ENCODE measurements at regions of chr9 and their contacts with region 1.

Region 1: GRCh38 chr9:114587385-114588202 is at the start of gene ATP6V1G1:
- DNase-seq: peak; percentile 98
- H3K4me3 ChIP-seq: peak within 1 kb of the TSS; percentile 81 to 90 (median 88)
- H3K27ac ChIP-seq: peak within 1 kb of the TSS; percentile 90 to 97 (median 96)
- H3K4me1 ChIP-seq: peaks cover 35 to 50% (median 37%) of the 10 kb centered on the region in 3 donors
- H3K27me3 ChIP-seq: no peaks in the 10 kb centered on the region
- CTCF ChIP-seq: peak in 4 of 6 experiments; percentile 6 to 42 (median 14)
- POLR2A ChIP-seq: peak in 3 of 4 donors; percentile 85 to 95 (median 89)
- total RNA-seq, gene ATP6V1G1: 151 to 210 (median 185) TPM

Region 2: DNA sequence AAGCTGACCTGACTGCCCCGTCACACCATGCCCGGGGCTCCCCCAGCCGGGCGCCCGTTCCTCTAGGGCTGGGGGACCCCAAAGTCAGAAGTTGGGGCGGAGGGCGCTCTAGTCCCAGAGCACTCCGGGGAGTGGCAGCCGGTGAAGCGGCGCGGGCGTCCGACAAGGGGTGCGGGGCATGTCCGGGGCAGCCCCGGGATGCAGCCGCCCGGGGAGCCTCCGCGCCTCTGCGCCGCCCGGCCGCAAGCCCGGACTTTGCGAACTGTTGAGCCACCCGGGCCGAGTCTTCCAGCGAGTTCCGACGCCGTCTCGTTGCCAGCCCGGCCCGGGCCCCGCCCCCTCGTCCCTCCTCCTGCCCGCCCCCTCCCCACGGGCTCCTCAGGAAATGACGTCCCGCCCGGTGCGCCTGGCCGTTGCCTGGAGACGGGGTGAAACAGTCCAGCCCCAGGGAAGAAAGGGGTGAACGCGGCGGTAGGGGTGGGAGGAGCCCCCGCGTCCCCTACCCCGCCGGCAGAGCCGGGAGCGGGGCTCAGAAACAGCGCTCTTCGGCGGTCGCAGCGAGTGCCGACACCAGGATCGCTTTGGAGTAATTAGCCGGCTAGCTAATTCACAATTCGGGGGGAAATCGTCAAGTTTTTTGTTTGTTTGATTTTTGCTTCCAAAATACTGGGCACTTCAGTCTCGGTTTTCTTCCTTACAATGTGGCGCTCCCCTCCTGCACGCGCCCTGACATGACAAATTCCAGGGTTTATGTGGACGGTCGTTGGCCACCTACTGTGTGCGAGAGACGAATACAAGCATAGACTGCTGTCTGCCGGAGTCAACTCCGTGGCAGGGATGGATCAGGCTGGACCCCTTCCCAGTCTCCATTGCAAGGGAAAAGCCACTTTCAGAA is 82.2 kb before region 1 on chr9 and contains the start of gene WHRN:
- intact Hi-C with region 1: loop called (anchors 10 kb)
- DNase-seq: peak; percentile 55
- H3K4me3 ChIP-seq: peak within 1 kb of the TSS; percentile 62 to 86 (median 68)
- H3K27ac ChIP-seq: peak within 1 kb of the TSS; percentile 76 to 87 (median 84)
- H3K4me1 ChIP-seq: peaks cover 14 to 55% (median 15%) of the 10 kb centered on the region in 3 donors
- H3K27me3 ChIP-seq: peaks cover 0 to 54% (median 0%) of the 10 kb centered on the region in 4 donors
- CTCF ChIP-seq: no peak
- POLR2A ChIP-seq: peak in 2 of 4 donors; percentile 59 to 76
- total RNA-seq, gene WHRN: 2.9 to 6.1 (median 3.4) TPM